ENCODE measurements at regions of chr3 and their contacts with region 1.

Region 1: GRCh38 chr3:124014366-124014942 is 22.5 kb upstream of the ROPN1 start:
- DNase-seq: no peak

Region 2: GRCh38 chr3:124467980-124468902 is 453.8 kb after region 1 on chr3:
- intact Hi-C with region 1: loop called (anchors 5 to 10 kb)
- DNase-seq: no peak